Heart left ventricle (tissue), 16 donors: ENCODE measurements at regions of chr20 and their contacts with region 1.

Region 1: DNA sequence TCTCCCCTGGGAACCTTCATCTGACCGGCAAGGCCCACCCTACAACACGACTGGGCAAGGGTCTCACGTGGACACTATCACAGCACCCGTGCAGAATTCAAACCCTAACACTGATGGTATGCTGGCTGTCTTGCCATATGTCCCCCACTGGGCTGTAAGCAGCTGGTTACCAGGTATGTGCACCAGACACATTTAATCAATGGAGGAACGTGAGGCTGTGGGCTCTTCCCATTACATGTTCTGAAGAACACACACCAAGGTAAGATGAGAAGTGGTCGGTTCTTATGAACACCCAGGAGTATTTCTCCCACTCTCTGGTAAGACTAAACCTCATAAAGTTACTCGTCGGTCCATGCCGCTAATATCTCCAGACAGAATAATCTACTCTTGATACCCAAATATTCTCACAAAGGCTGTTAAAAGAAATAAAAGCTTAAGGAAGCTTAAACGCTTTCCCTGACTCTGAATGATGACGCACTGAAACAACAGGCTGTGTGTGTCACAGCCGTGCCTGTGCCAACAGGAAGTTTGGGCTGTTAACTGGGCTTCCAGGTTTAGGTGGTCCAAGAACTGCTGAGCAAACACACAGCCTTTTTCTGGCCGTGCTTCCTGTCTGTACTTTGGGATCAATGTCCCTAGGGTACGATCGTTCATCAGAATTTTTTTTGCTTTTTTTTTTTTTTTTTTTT is 75.3 kb downstream of the SLC23A2 start:
- DNase-seq: peak; percentile 68 to 73 (median 71)
- ATAC-seq: peak; percentile 79 to 96 (median 86)
- H3K4me3 ChIP-seq: peak overlapping the region in 8 of 12 donors; percentile 3 to 37 (median 22)
- H3K27ac ChIP-seq: peak overlapping the region in 11 of 12 donors; percentile 26 to 79 (median 50)
- H3K4me1 ChIP-seq: peaks cover 0 to 19% (median 4%) of the 10 kb centered on the region in 12 donors
- H3K27me3 ChIP-seq: no peaks in the 10 kb centered on the region
- CTCF ChIP-seq: no peak
- POLR2A ChIP-seq: no peak

Region 2: GRCh38 chr20:4869290-4870193 is 56.4 kb before region 1 on chr20:
- intact Hi-C with region 1: loop called in 1 of 10 experiments (anchors 10 kb)
- DNase-seq: no peak
- ATAC-seq: peak in 1 of 4 donors; percentile 74
- H3K4me3 ChIP-seq: no peak overlapping the region
- H3K27ac ChIP-seq: no peak overlapping the region
- H3K4me1 ChIP-seq: no peaks in the 10 kb centered on the region
- H3K27me3 ChIP-seq: no peaks in the 10 kb centered on the region
- CTCF ChIP-seq: no peak
- POLR2A ChIP-seq: no peak